Panc1 (cell line): ENCODE measurements at regions of chr6 and their contacts with region 1.

Region 1: GRCh38 chr6:116096979-116097816 is 3.5 kb upstream of the NT5DC1 start:
- DNase-seq: no peak
- ATAC-seq: no peak
- H3K4me3 ChIP-seq: no peak overlapping the region
- H3K27ac ChIP-seq: no peak overlapping the region
- H3K4me1 ChIP-seq: peaks cover 14% of the 10 kb centered on the region
- H3K27me3 ChIP-seq: no peaks in the 10 kb centered on the region; the same call in 1 of the 2 replicates
- CTCF ChIP-seq: peak; percentile 69; the same call in 1 of the 2 replicates

Region 2: GRCh38 chr6:116010790-116011401 is 86.3 kb before region 1 on chr6:
- CTCF ChIA-PET with region 1: interaction called, 10 read pairs
- POLR2A ChIA-PET with region 1: no interaction called
- in situ Hi-C with region 1: no loop called
- intact Hi-C with region 1: loop called (anchors 1 kb)
- DNase-seq: peak; percentile 62
- ATAC-seq: peak; percentile 92
- H3K4me3 ChIP-seq: no peak overlapping the region
- H3K27ac ChIP-seq: no peak overlapping the region
- H3K4me1 ChIP-seq: 0 out of 2 replicates have a peak, but pooled peaks cover 3% of the 10 kb centered on the region
- H3K27me3 ChIP-seq: no peaks in the 10 kb centered on the region
- CTCF ChIP-seq: peak; percentile 95

Region 3: DNA sequence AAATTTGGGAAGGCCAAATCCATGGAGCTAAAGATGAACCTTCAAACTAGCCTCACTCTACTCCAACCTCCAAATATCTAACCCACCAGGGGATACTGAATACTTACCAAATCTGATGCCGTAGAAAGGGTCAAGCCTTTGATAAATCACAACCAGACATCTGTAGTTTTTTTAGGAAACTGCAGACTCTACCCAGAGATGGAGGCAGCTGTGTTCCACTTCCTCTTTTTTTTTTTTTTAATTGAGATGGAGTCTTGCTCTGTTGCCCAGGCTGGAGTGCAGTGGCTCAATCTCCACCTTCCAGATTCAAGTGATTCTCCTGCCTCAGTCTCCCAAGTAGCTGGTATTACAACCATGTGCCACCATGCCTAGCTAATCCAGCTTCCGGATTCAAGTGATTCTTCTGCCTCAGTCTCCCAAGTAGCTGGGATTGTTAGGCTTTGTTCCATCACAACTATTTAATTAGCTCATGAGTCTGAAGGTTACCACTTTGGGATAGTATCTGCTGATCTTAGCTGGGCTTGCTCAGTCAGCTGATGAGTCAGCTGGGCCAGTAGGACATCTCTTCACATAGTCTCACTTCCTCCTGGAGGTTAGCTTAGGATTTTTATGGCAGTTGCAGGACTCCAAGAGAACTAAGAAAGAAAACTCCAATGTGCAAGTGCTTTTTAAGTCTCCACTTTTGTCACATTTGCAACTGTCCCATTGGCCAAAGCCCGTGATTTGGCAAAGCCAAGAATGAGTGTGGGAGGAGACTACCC is 49.8 kb before region 1 on chr6:
- CTCF ChIA-PET with region 1: no interaction called
- POLR2A ChIA-PET with region 1: no interaction called
- in situ Hi-C with region 1: no loop called
- intact Hi-C with region 1: no loop called
- DNase-seq: no peak
- ATAC-seq: no peak
- H3K4me3 ChIP-seq: no peak overlapping the region
- H3K27ac ChIP-seq: no peak overlapping the region
- H3K4me1 ChIP-seq: no peaks in the 10 kb centered on the region
- H3K27me3 ChIP-seq: peaks cover 6% of the 10 kb centered on the region; the same call in 1 of the 2 replicates
- CTCF ChIP-seq: no peak